ENCODE measurements at regions of chr3 and their contacts with region 1.

Region 1: GRCh38 chr3:8622873-8623691 is 21.5 kb downstream of the SSUH2 start:
- DNase-seq: peak; percentile 57
- H3K4me3 ChIP-seq: no peak overlapping the region
- H3K27ac ChIP-seq: no peak overlapping the region
- H3K4me1 ChIP-seq: peaks cover 0 to 8% (median 2%) of the 10 kb centered on the region in 4 donors
- H3K27me3 ChIP-seq: no peaks in the 10 kb centered on the region
- CTCF ChIP-seq: peak; percentile 82 to 90 (median 89)
- EP300 ChIP-seq: no peak
- POLR2A ChIP-seq: no peak

Region 2: GRCh38 chr3:6825524-6825923 is 1797.6 kb before region 1 on chr3:
- in situ Hi-C with region 1: no loop called
- intact Hi-C with region 1: no loop called
- DNase-seq: no peak
- H3K4me3 ChIP-seq: no peak overlapping the region
- H3K27ac ChIP-seq: no peak overlapping the region
- H3K4me1 ChIP-seq: no peaks in the 10 kb centered on the region
- H3K27me3 ChIP-seq: no peaks in the 10 kb centered on the region
- CTCF ChIP-seq: no peak
- EP300 ChIP-seq: no peak
- POLR2A ChIP-seq: no peak

Region 3: DNA sequence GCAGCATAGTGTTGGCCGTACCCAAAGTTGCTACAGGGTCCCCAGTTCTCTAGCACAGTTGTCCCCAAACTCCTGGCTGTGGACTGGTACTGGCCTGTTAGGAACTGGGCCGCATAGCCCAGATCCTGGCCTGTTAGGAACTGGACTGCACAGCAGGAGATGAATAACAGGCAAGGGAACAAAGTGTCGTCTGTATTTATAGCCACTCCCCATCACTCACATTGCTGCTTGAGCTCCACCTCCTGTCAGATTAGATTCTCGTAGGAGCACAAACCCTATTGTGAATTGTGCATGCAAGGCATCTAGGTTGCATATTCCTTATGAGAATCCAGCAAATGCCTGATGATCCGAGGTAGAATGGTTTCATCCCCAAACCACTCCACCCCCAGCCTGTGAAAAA is 725.4 kb before region 1 on chr3:
- in situ Hi-C with region 1: no loop called
- intact Hi-C with region 1: no loop called
- DNase-seq: no peak
- H3K4me3 ChIP-seq: no peak overlapping the region
- H3K27ac ChIP-seq: no peak overlapping the region
- H3K4me1 ChIP-seq: no peaks in the 10 kb centered on the region
- H3K27me3 ChIP-seq: no peaks in the 10 kb centered on the region
- CTCF ChIP-seq: no peak
- EP300 ChIP-seq: no peak
- POLR2A ChIP-seq: no peak

Region 4: GRCh38 chr3:8436718-8437184 is 186.3 kb before region 1 on chr3:
- in situ Hi-C with region 1: loop called in 3 of 4 experiments (anchors 10 to 25 kb)
- intact Hi-C with region 1: loop called (anchors 2 kb)
- DNase-seq: no peak
- H3K4me3 ChIP-seq: no peak overlapping the region
- H3K27ac ChIP-seq: no peak overlapping the region
- H3K4me1 ChIP-seq: no peaks in the 10 kb centered on the region
- H3K27me3 ChIP-seq: no peaks in the 10 kb centered on the region
- CTCF ChIP-seq: no peak
- EP300 ChIP-seq: peak; percentile 21
- POLR2A ChIP-seq: no peak

Region 5: GRCh38 chr3:8441969-8442559 is 181.0 kb before region 1 on chr3:
- in situ Hi-C with region 1: loop called (anchors 5 to 25 kb)
- intact Hi-C with region 1: loop called (anchors 2 kb)
- DNase-seq: no peak
- H3K4me3 ChIP-seq: no peak overlapping the region
- H3K27ac ChIP-seq: peak overlapping the region in 2 of 4 donors; percentile 0 to 84
- H3K4me1 ChIP-seq: peaks cover 0 to 34% (median 21%) of the 10 kb centered on the region in 4 donors
- H3K27me3 ChIP-seq: no peaks in the 10 kb centered on the region
- CTCF ChIP-seq: peak; percentile 62 to 79 (median 71)
- EP300 ChIP-seq: no peak
- POLR2A ChIP-seq: no peak

Region 6: GRCh38 chr3:8607234-8608040 is 15.6 kb before region 1 on chr3:
- in situ Hi-C with region 1: no loop called
- intact Hi-C with region 1: no loop called
- DNase-seq: no peak
- H3K4me3 ChIP-seq: no peak overlapping the region
- H3K27ac ChIP-seq: no peak overlapping the region
- H3K4me1 ChIP-seq: peaks cover 0 to 3% (median 0%) of the 10 kb centered on the region in 4 donors
- H3K27me3 ChIP-seq: no peaks in the 10 kb centered on the region
- CTCF ChIP-seq: peak; percentile 17 to 50 (median 36)
- EP300 ChIP-seq: no peak
- POLR2A ChIP-seq: no peak

Measured in transverse colon (tissue), 4 donors.